Naive thymus-derived CD4-positive, alpha-beta T cell (primary cell): ENCODE measurements at regions of chrX and their contacts with region 1.

Region 1: GRCh38 chrX:70289793-70290776 is at the starts of genes KIF4A and PDZD11:
- DNase-seq: peak; percentile 47 to 86 (median 63)
- ATAC-seq: peak; percentile 99
- H3K4me3 ChIP-seq: peak within 1 kb of the TSS; percentile 89
- H3K4me3 Mint-ChIP-seq: peak within 1 kb of the TSS; percentile 84 to 93 (median 88)
- H3K27ac ChIP-seq: peak within 1 kb of the TSS; percentile 60
- H3K27ac Mint-ChIP-seq: peak within 1 kb of the TSS; percentile 36 to 92 (median 84)
- H3K4me1 ChIP-seq: peaks cover 5 to 9% of the 10 kb centered on the region in 2 donors
- H3K4me1 Mint-ChIP-seq: peaks cover 0 to 27% (median 15%) of the 10 kb centered on the region in 7 donors
- H3K27me3 ChIP-seq: no peaks in the 10 kb centered on the region
- H3K27me3 Mint-ChIP-seq: no peaks in the 10 kb centered on the region
- total RNA-seq, gene KIF4A: 0.20 to 26.5 (median 0.21) TPM in 4 of 5 experiments, not detected in the other
- total RNA-seq, gene PDZD11: 5.9 to 34.1 (median 10.8) TPM

Region 2: DNA sequence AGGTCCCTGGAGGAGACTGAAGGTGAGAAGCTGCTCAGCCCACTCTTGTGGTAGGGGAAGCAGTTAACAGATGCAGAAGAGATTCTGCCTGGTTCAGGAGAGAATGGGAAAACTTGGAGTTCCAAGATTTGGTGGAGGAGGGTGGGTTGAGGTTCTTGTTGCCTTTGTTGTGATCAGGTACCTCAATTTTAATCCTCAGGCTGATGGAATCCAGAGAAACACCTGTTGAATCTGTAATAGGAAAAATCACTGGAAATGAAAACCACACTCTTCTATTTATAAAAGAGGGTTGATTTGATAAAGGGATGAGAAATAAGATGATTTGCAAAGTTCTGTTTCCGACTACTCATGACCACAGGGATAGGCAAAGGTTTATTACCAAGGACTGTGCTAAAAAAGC is 542.0 kb before region 1 on chrX:
- CTCF ChIA-PET with region 1: no interaction called
- POLR2A ChIA-PET with region 1: no interaction called
- intact Hi-C with region 1: no loop called
- DNase-seq: no peak
- ATAC-seq: no peak
- H3K4me3 ChIP-seq: no peak overlapping the region
- H3K4me3 Mint-ChIP-seq: no peak overlapping the region
- H3K27ac ChIP-seq: no peak overlapping the region
- H3K27ac Mint-ChIP-seq: no peak overlapping the region
- H3K4me1 ChIP-seq: no peaks in the 10 kb centered on the region
- H3K4me1 Mint-ChIP-seq: no peaks in the 10 kb centered on the region
- H3K27me3 ChIP-seq: no peaks in the 10 kb centered on the region
- H3K27me3 Mint-ChIP-seq: no peaks in the 10 kb centered on the region

Region 3: GRCh38 chrX:70025464-70025863 is 264.6 kb before region 1 on chrX:
- CTCF ChIA-PET with region 1: no interaction called
- POLR2A ChIA-PET with region 1: no interaction called
- intact Hi-C with region 1: no loop called
- DNase-seq: no peak
- ATAC-seq: no peak
- H3K4me3 ChIP-seq: no peak overlapping the region
- H3K4me3 Mint-ChIP-seq: peak overlapping the region in 6 of 10 donors; percentile 12 to 41 (median 28)
- H3K27ac ChIP-seq: no peak overlapping the region
- H3K27ac Mint-ChIP-seq: peak overlapping the region in 2 of 9 donors; percentile 79 to 88
- H3K4me1 ChIP-seq: peaks cover 0 to 24% of the 10 kb centered on the region in 2 donors
- H3K4me1 Mint-ChIP-seq: peaks cover 14 to 37% (median 26%) of the 10 kb centered on the region in 7 donors
- H3K27me3 ChIP-seq: no peaks in the 10 kb centered on the region
- H3K27me3 Mint-ChIP-seq: no peaks in the 10 kb centered on the region

Region 4: GRCh38 chrX:70133303-70134115 is 156.6 kb before region 1 on chrX and contains the start of gene IGBP1:
- CTCF ChIA-PET with region 1: no interaction called
- POLR2A ChIA-PET with region 1: interaction called, 3 read pairs
- intact Hi-C with region 1: loop called (anchors 1 kb)
- DNase-seq: peak; percentile 40 to 90 (median 82)
- ATAC-seq: peak; percentile 90
- H3K4me3 ChIP-seq: peak within 1 kb of the TSS; percentile 94
- H3K4me3 Mint-ChIP-seq: peak within 1 kb of the TSS; percentile 95 to 99 (median 99)
- H3K27ac ChIP-seq: peak within 1 kb of the TSS; percentile 82
- H3K27ac Mint-ChIP-seq: peak within 1 kb of the TSS; percentile 91 to 99 (median 97)
- H3K4me1 ChIP-seq: peaks cover 16 to 18% of the 10 kb centered on the region in 2 donors
- H3K4me1 Mint-ChIP-seq: peaks cover 14 to 47% (median 29%) of the 10 kb centered on the region in 7 donors
- H3K27me3 ChIP-seq: no peaks in the 10 kb centered on the region
- H3K27me3 Mint-ChIP-seq: no peaks in the 10 kb centered on the region
- total RNA-seq, gene IGBP1: 46.7 to 70.1 (median 58.9) TPM

Region 5: GRCh38 chrX:70336767-70337166 is 46.7 kb after region 1 on chrX:
- CTCF ChIA-PET with region 1: no interaction called
- POLR2A ChIA-PET with region 1: no interaction called
- intact Hi-C with region 1: loop called in 1 of 2 experiments (anchors 2 kb)
- DNase-seq: no peak
- ATAC-seq: no peak
- H3K4me3 ChIP-seq: no peak overlapping the region
- H3K4me3 Mint-ChIP-seq: peak overlapping the region in 1 of 10 donors; percentile 39
- H3K27ac ChIP-seq: no peak overlapping the region
- H3K27ac Mint-ChIP-seq: peak overlapping the region in 1 of 9 donors; percentile 51
- H3K4me1 ChIP-seq: no peaks in the 10 kb centered on the region
- H3K4me1 Mint-ChIP-seq: peaks cover 0 to 15% (median 0%) of the 10 kb centered on the region in 7 donors
- H3K27me3 ChIP-seq: no peaks in the 10 kb centered on the region
- H3K27me3 Mint-ChIP-seq: no peaks in the 10 kb centered on the region

Region 6: GRCh38 chrX:70386235-70386634 is 96.2 kb after region 1 on chrX:
- CTCF ChIA-PET with region 1: no interaction called
- POLR2A ChIA-PET with region 1: no interaction called
- intact Hi-C with region 1: loop called in 1 of 2 experiments (anchors 5 kb)
- DNase-seq: no peak
- ATAC-seq: no peak
- H3K4me3 ChIP-seq: no peak overlapping the region
- H3K4me3 Mint-ChIP-seq: peak overlapping the region in 1 of 10 donors; percentile 14
- H3K27ac ChIP-seq: no peak overlapping the region
- H3K27ac Mint-ChIP-seq: peak overlapping the region in 1 of 9 donors; percentile 38
- H3K4me1 ChIP-seq: no peaks in the 10 kb centered on the region
- H3K4me1 Mint-ChIP-seq: peaks cover 0 to 10% (median 0%) of the 10 kb centered on the region in 7 donors
- H3K27me3 ChIP-seq: no peaks in the 10 kb centered on the region
- H3K27me3 Mint-ChIP-seq: no peaks in the 10 kb centered on the region